ENCODE measurements at regions of chr11 and their contacts with region 1.

Region 1: DNA sequence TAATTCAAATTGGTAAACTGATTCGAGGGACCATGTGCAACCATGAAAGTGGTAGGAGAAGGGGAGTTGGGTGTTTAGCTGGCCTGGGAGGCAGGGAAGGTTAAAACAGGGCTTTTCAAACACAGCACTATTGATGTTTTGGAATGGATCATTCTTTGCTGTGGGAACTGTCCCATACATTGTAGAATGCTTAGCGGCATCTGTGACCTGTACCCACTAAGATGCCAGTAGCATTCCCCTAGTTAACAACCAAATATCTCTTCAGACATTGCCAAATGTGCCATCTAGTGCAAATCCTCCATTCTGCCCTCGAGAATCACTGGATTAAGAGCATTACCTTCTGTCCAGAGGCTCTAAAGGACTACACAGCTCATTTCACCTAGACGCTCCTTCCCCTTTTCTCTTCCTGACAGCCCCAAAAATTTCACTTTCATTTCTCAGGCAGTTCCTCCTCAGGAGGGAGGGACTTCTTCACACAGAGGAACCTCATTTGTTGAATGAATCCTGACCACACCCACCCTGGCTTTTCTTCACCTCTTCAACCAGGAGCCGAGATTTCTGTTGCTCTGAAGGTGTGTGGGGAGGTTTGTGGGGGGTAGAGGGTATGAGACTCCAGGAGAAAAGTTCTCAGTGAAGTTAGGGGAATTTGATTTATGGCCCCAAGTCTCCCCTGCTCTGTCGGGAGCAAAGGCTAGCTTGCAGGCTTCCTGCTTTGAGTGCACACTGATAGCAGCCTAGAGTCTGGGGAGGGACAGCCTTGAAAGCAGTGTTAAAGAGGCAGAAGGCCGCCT is at the start of gene TRIM34:
- DNase-seq: peak; percentile 76
- H3K4me3 ChIP-seq: peak within 1 kb of the TSS; percentile 53 to 69 (median 63)
- H3K27ac ChIP-seq: peak within 1 kb of the TSS; percentile 60
- H3K4me1 ChIP-seq: peaks cover 26% of the 10 kb centered on the region
- H3K27me3 ChIP-seq: no peaks in the 10 kb centered on the region
- CTCF ChIP-seq: no peak
- total RNA-seq, gene TRIM34: 2.4 to 5.7 TPM

Region 2: DNA sequence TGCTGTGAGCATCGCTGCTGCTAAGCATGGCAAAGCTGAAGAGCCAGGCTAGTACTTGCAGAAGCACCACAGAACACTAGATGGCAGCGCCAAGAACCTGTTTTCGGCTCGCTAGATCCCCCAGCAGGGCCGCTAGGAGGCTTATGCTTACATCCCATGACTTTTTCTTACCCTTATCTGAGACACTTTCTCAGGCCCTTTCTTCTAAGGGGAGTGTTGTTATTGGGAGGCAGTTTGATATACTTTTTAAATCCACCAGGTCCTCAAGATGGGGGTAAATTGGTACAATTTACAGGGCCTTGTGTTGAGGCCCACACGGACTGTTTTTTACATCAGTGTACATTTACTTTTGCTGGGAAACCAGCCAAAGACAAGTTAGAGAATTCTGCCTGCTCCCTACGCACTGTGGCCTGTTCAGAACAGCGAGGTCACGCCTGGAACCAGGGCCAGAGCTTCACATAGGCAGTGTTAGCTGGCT is 24.3 kb before region 1 on chr11:
- CTCF ChIA-PET with region 1: no interaction called
- dilution Hi-C with region 1: no loop called
- in situ Hi-C with region 1: no loop called
- intact Hi-C with region 1: loop called (anchors 1 kb)
- DNase-seq: no peak
- H3K4me3 ChIP-seq: no peak overlapping the region
- H3K27ac ChIP-seq: no peak overlapping the region
- H3K4me1 ChIP-seq: peaks cover 5% of the 10 kb centered on the region
- H3K27me3 ChIP-seq: no peaks in the 10 kb centered on the region
- CTCF ChIP-seq: peak; percentile 77 to 86

Region 3: DNA sequence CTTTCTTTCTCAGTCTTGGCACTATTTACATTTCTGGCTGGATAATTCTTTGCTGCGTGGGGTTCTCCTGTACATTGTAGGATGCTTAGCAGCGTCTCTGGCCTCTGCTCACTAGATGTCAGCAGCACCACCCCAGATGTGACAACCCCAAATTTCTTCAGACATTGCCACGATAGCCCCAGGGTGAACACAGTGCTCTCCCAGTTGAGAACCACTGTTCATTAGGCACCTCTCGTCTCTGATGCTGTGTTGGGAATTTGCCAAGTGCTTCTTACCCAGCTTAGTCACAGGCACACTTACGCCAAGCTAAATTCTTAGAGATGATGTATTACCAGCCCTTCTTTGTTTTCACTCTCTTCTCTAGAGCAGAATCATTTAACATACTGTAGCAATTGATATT is 18.8 kb before region 1 on chr11:
- CTCF ChIA-PET with region 1: no interaction called
- dilution Hi-C with region 1: no loop called
- in situ Hi-C with region 1: no loop called
- intact Hi-C with region 1: loop called (anchors 2 kb)
- DNase-seq: peak; percentile 85
- H3K4me3 ChIP-seq: no peak overlapping the region
- H3K27ac ChIP-seq: no peak overlapping the region
- H3K4me1 ChIP-seq: no peaks in the 10 kb centered on the region
- H3K27me3 ChIP-seq: no peaks in the 10 kb centered on the region
- CTCF ChIP-seq: peak in 1 of 2 donors; percentile 51

Region 4: DNA sequence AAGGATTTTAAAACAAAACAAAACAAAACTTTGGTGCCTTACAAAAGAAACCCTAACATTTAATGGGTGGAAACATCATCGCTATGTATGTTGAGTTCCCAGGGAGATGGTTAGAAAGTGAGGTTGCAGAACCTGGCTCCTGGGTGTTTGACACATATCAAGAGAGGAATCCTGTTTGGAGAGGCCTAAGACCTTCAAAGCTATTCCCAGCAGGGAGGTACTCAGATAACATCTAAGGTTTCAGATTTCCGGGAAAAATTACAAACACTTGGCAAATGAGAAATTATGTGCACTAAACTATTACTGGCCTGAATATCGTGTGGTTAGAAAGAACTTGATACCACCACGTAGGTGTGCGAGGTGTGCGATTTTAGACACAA is 41.7 kb after region 1 on chr11:
- CTCF ChIA-PET with region 1: no interaction called
- dilution Hi-C with region 1: no loop called
- in situ Hi-C with region 1: no loop called
- intact Hi-C with region 1: no loop called
- DNase-seq: no peak
- H3K4me3 ChIP-seq: no peak overlapping the region
- H3K27ac ChIP-seq: no peak overlapping the region
- H3K4me1 ChIP-seq: no peaks in the 10 kb centered on the region
- H3K27me3 ChIP-seq: no peaks in the 10 kb centered on the region
- CTCF ChIP-seq: no peak

Region 5: DNA sequence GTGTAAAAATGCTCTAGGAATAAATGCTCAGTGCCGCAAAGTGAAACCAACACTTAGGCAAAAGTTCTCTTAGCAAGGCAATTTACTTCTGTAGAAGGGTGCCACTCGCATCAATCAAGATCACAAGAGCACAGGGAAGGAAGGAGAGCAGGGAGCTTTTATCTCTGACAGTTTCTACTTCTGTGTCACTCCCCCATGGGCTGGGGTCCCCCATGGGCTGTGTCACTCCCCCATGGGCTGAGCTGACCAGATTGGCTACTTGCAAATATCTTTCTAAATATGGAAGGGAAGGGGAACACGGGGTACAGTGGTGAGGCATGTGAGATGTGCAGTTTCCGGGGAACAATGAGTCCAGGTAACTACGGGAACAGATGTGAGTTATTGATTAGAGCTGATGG is 184.4 kb after region 1 on chr11:
- CTCF ChIA-PET with region 1: no interaction called
- dilution Hi-C with region 1: no loop called
- in situ Hi-C with region 1: no loop called
- intact Hi-C with region 1: no loop called
- DNase-seq: peak; percentile 2
- H3K4me3 ChIP-seq: peak overlapping the region; percentile 37 to 48 (median 46)
- H3K27ac ChIP-seq: no peak overlapping the region
- H3K4me1 ChIP-seq: no peaks in the 10 kb centered on the region
- H3K27me3 ChIP-seq: peaks cover 4% of the 10 kb centered on the region
- CTCF ChIP-seq: no peak

Region 6: DNA sequence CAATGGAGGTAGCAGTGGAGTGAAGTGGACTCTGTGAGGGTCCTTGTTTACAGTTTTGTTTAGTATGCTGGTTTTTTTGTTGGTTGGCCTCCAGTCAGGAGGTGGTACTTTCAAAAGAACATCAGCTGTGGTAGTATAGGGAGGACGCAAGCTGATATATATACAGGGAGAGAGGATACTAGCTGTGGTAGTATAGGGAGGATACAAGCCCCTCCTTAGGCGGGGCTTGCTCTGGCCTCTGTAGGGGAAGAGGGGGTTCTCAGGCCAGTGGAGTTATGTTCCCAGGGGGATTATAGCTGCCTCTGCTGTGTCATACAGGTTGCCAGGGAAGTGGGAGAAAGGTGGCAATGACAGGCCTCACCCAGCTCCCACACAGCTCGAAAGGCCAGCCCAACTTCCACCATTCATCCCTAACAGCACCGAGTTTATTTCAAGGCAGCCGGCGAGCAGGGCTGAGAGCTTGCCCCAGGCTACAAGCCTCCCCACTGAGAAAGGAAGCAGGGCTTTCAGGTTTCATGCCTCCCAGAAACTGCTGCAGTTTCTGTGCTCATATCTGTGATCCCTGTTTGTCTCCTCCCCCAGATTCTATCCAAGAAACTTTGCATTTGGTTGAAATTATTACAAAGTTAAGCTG is 206.6 kb after region 1 on chr11:
- CTCF ChIA-PET with region 1: no interaction called
- dilution Hi-C with region 1: no loop called
- in situ Hi-C with region 1: no loop called
- intact Hi-C with region 1: no loop called
- DNase-seq: peak; percentile 3
- H3K4me3 ChIP-seq: no peak overlapping the region
- H3K27ac ChIP-seq: no peak overlapping the region
- H3K4me1 ChIP-seq: no peaks in the 10 kb centered on the region
- H3K27me3 ChIP-seq: no peaks in the 10 kb centered on the region
- CTCF ChIP-seq: no peak